CD8-positive, alpha-beta memory T cell (primary cell): ENCODE measurements at regions of chr11 and their contacts with region 1.

Region 1: DNA sequence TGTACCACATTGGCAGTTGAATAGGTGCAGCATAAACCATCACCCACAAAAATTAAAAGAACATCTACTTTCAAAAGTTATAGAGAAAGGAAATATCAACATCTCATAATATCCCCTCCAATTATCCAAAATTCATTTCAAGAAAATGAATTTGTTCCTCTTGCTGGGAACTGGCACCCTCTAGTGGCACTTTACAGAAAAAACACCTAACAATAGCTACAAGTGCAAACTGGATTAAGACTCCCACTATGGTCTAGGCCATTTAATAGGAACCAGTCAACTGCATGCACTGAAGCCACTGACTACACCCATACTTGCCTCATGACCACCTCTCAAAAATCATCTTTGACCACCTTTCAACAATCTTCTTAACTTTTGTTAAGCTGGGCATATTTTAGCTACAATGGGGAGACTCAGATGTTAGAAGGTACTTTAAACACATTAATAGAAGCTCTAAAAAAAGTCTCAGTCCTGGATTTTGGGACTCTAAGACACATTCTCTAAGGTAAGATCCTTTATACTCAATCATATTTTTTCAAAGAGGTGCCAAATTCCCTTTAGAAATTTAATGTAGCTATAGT is 17.3 kb downstream of the TRAF6 start:
- DNase-seq: peak in 4 of 5 donors; percentile 15 to 51 (median 36)
- H3K4me3 ChIP-seq: no peak overlapping the region
- H3K4me3 Mint-ChIP-seq: no peak overlapping the region
- H3K27ac ChIP-seq: no peak overlapping the region
- H3K27ac Mint-ChIP-seq: peak overlapping the region in 5 of 8 donors; percentile 2 to 82 (median 12)
- H3K4me1 ChIP-seq: peaks cover 8% of the 10 kb centered on the region
- H3K4me1 Mint-ChIP-seq: peaks cover 19 to 34% (median 26%) of the 10 kb centered on the region in 3 donors
- H3K27me3 ChIP-seq: no peaks in the 10 kb centered on the region
- H3K27me3 Mint-ChIP-seq: no peaks in the 10 kb centered on the region

Region 2: DNA sequence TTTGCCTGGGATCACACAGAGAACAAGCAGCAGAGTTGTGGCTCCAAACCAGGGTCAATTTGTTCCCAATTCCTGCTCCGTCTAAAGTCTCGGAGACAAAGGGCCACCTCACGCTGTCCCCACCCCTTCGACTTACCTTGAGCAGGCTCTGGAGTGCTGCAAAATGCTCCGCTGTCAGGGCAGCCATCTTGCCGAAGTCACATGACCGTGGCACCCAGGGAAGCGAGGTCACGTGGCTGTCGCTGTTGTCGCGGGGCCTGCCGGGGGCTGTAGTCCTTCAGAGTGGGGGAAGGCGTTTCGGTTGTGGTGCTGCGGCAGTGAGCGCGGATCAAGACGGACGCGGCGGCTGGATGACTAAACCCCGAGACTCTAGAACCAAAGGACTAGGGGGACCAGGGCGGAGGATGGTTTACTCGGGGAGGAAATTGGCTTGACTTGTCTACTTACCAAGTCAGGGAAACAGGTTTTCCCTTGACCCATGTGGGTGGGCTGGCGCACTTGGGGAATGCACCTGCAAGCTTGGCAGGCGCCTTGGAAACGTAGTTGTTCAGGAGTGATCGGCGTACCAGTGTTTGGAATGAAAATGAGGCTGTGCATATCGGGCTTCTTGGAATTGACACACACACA is 203.5 kb before region 1 on chr11 and contains the start of gene COMMD9:
- CTCF ChIA-PET with region 1: interaction called, 31 read pairs
- POLR2A ChIA-PET with region 1: no interaction called
- DNase-seq: peak; percentile 87 to 95 (median 91)
- H3K4me3 ChIP-seq: peak within 1 kb of the TSS; percentile 94
- H3K4me3 Mint-ChIP-seq: peak within 1 kb of the TSS; percentile 85 to 97 (median 95)
- H3K27ac ChIP-seq: peak within 1 kb of the TSS; percentile 40
- H3K27ac Mint-ChIP-seq: peak within 1 kb of the TSS; percentile 44 to 97 (median 93)
- H3K4me1 ChIP-seq: peaks cover 12% of the 10 kb centered on the region
- H3K4me1 Mint-ChIP-seq: peaks cover 36 to 49% (median 47%) of the 10 kb centered on the region in 3 donors
- H3K27me3 ChIP-seq: no peaks in the 10 kb centered on the region
- H3K27me3 Mint-ChIP-seq: peaks cover 0 to 2% of the 10 kb centered on the region in 2 donors
- total RNA-seq, gene COMMD9: 63.6 to 71.5 TPM

Region 3: DNA sequence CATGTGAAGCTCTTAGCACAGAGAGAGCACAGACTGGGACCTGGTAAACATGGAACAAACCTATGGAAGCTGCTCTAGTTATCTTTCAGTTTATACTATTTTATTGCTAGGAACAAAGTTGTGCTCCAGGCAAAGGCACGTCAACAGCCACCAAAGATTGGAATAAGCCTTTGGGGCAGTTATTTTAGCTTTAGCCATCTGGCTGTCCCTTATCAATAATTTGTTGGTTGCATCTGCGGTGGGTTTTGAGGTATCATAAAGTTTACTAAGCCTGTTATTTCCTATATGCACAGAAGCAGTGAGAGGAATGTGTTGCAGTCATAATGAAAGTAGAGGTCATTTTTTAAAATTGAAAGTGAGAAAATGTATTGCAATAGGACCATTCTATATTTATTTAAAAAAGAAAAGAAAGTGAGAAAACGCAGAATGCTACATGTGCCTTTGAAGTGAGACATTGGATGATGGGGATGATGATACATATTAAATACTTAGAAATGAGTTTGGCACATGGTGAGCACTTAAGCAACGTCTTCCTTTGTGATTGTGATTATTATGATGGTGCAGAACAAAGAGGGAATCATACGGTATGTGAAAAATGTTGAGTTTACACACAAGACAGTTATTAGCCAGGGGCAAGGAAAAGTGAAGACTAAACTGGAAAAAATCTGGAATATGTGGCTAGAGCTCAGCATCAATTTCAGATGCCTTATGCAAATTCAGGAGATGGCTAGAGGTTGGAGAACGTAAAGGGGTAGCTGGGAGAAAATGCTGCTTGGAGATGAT is 138.4 kb before region 1 on chr11:
- CTCF ChIA-PET with region 1: interaction called, 27 read pairs
- POLR2A ChIA-PET with region 1: interaction called, 3 read pairs
- DNase-seq: no peak
- H3K4me3 ChIP-seq: no peak overlapping the region
- H3K4me3 Mint-ChIP-seq: peak overlapping the region in 2 of 7 donors; percentile 10 to 52
- H3K27ac ChIP-seq: no peak overlapping the region
- H3K27ac Mint-ChIP-seq: peak overlapping the region in 7 of 8 donors; percentile 20 to 91 (median 72)
- H3K4me1 ChIP-seq: peaks cover 23% of the 10 kb centered on the region
- H3K4me1 Mint-ChIP-seq: peaks cover 46 to 83% (median 75%) of the 10 kb centered on the region in 3 donors
- H3K27me3 ChIP-seq: no peaks in the 10 kb centered on the region
- H3K27me3 Mint-ChIP-seq: peaks cover 0 to 9% of the 10 kb centered on the region in 2 donors

Region 4: GRCh38 chr11:36459046-36459445 is 33.8 kb before region 1 on chr11:
- CTCF ChIA-PET with region 1: no interaction called
- POLR2A ChIA-PET with region 1: no interaction called
- DNase-seq: no peak
- H3K4me3 ChIP-seq: no peak overlapping the region
- H3K4me3 Mint-ChIP-seq: no peak overlapping the region
- H3K27ac ChIP-seq: no peak overlapping the region
- H3K27ac Mint-ChIP-seq: peak overlapping the region in 3 of 8 donors; percentile 27 to 87 (median 78)
- H3K4me1 ChIP-seq: peaks cover 4% of the 10 kb centered on the region
- H3K4me1 Mint-ChIP-seq: peaks cover 23 to 43% (median 26%) of the 10 kb centered on the region in 3 donors
- H3K27me3 ChIP-seq: no peaks in the 10 kb centered on the region
- H3K27me3 Mint-ChIP-seq: peaks cover 0 to 1% of the 10 kb centered on the region in 2 donors

Region 5: DNA sequence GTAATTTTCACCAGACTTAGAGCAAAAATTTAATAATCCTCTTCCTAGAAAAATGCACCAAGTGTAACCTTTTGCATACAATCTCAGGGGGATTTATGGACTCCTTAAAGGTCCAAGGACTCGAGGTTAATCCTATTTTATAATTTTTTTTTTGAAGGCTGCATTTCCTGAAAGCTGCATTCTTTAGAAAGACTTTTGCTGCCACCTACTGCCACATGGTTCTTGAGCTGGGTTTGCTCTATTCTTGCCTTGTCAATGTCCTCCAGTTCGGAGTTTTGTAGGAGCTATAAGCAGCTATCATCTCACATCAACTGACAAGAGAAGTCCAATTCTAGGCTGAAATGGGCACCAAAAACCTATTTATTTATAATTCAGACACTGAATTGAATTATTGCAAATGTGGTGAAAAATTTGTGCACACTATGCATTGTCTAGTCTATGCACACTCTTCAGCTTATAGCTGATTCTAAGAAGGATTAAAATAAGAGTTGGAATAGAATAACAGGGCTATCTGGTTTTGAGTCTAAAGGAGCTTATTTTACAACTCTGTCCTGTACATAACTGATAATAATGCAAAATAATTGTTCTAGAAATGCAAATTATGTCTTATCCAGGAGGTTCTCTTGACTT is 14.0 kb before region 1 on chr11:
- CTCF ChIA-PET with region 1: interaction called, 17 read pairs
- POLR2A ChIA-PET with region 1: no interaction called
- DNase-seq: peak in 3 of 5 donors; percentile 14 to 30 (median 18)
- H3K4me3 ChIP-seq: no peak overlapping the region
- H3K4me3 Mint-ChIP-seq: no peak overlapping the region
- H3K27ac ChIP-seq: no peak overlapping the region
- H3K27ac Mint-ChIP-seq: no peak overlapping the region
- H3K4me1 ChIP-seq: no peaks in the 10 kb centered on the region
- H3K4me1 Mint-ChIP-seq: peaks cover 5 to 13% (median 13%) of the 10 kb centered on the region in 3 donors
- H3K27me3 ChIP-seq: no peaks in the 10 kb centered on the region
- H3K27me3 Mint-ChIP-seq: no peaks in the 10 kb centered on the region